Panc1 (cell line): ENCODE measurements at regions of chr2 and their contacts with region 1.

Region 1: GRCh38 chr2:109466673-109467575 is 146.8 kb downstream of the SEPTIN10 start:
- DNase-seq: peak; percentile 5
- ATAC-seq: peak; percentile 73
- H3K4me3 ChIP-seq: no peak overlapping the region
- H3K27ac ChIP-seq: no peak overlapping the region
- H3K4me1 ChIP-seq: peaks cover 6% of the 10 kb centered on the region
- H3K27me3 ChIP-seq: no peaks in the 10 kb centered on the region
- CTCF ChIP-seq: no peak

Region 2: DNA sequence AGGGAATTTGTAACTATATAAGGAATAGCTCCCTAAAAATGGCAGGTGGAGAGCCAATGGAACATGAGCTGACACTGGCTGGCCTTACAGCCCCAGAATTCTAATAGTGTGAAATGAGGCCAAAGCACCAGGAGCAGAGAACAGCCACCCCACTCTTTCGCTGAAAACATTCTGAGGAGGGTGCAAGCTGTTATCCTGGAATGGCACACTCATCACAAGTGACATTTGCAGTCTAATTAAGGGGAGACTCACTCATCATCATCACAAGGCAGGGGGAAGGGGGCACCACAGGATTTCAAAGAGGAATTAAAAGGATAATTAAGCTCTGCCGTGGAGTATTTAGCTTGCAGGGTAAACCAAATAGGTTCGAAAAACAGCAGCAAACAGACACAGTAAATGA is 572.2 kb before region 1 on chr2:
- CTCF ChIA-PET with region 1: no interaction called
- POLR2A ChIA-PET with region 1: interaction called, 10 read pairs
- in situ Hi-C with region 1: no loop called
- intact Hi-C with region 1: no loop called
- DNase-seq: no peak
- ATAC-seq: no peak
- H3K4me3 ChIP-seq: no peak overlapping the region
- H3K27ac ChIP-seq: no peak overlapping the region
- H3K4me1 ChIP-seq: no peaks in the 10 kb centered on the region
- H3K27me3 ChIP-seq: no peaks in the 10 kb centered on the region
- CTCF ChIP-seq: no peak

Region 3: DNA sequence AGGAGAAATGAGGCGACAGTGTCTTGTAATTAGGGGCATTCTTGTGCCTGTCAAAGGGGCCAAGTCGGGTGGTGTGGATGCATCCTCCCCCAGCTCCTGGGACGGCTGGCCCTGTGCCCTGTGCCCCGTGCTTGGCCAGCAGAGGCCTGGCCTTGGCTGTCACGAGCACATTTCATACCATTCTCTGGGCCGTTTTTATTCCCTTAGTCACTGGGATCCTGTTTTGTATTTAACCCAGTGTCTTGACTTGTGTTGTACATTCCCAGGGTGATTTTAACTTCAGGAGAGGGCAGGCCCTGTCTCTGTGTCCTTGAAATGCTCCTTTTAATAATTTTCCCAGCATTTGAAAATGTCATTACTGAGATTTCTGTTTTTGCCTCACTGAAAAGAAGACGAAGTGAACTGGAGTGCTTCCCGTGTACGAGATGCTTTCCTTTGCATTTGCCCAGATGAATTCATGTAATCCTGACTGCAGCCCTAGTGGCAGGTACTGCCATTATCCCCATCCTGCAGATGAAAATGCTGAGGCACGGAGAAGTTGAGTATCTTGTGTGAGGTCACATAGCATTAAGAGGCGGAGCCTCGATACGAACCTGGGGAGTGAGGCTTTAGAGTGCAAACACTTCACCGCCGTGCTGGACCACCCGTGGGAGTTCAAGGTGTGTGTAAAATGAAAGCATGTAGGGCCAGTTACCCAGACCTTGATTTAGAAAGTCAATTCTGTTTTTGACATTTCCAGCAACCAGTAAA is 280.9 kb before region 1 on chr2:
- CTCF ChIA-PET with region 1: no interaction called
- POLR2A ChIA-PET with region 1: no interaction called
- in situ Hi-C with region 1: no loop called
- intact Hi-C with region 1: no loop called
- DNase-seq: no peak
- ATAC-seq: peak; percentile 68
- H3K4me3 ChIP-seq: no peak overlapping the region
- H3K27ac ChIP-seq: peak overlapping the region; percentile 6
- H3K4me1 ChIP-seq: peaks cover 8% of the 10 kb centered on the region; the same call in 1 of the 2 replicates
- H3K27me3 ChIP-seq: peaks cover 4% of the 10 kb centered on the region; the same call in 1 of the 2 replicates
- CTCF ChIP-seq: no peak

Region 4: DNA sequence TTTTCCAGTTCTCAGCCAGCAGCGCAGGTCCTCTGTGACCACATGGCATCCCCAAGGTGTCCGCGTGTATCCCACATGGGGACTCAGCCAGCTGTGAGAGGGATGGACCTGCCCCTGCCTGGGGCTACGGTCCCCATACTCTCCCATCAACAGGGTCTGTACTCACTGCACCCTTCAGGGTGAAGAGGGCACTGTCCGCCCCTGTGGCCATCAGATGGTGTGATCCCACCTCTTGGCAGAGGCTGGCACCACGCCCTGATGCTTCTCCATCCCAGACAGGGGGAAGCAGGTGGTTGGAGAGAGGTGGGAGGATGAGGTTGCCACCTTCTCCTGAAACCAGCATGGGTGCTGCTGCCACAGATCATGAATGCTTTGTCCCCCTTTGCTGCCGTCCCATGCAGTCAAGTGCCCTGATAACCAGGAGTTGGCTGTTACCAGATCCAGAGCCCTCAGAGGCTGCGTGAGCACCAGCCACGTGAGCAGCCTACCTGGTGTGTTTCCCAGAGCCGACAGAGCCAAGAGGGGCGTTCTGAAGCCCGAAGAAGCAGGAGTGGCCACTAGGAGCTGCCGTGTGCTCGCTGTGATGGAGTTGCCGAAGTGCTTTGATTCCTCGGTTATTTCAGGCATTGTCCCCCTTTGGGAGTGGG is 244.0 kb before region 1 on chr2:
- CTCF ChIA-PET with region 1: no interaction called
- POLR2A ChIA-PET with region 1: no interaction called
- in situ Hi-C with region 1: no loop called
- intact Hi-C with region 1: no loop called
- DNase-seq: no peak
- ATAC-seq: 0 out of 2 replicates have a peak, but pooled peaks have one; percentile 26
- H3K4me3 ChIP-seq: no peak overlapping the region
- H3K27ac ChIP-seq: no peak overlapping the region
- H3K4me1 ChIP-seq: no peaks in the 10 kb centered on the region
- H3K27me3 ChIP-seq: no peaks in the 10 kb centered on the region
- CTCF ChIP-seq: peak; percentile 39; the same call in 1 of the 2 replicates

Region 5: DNA sequence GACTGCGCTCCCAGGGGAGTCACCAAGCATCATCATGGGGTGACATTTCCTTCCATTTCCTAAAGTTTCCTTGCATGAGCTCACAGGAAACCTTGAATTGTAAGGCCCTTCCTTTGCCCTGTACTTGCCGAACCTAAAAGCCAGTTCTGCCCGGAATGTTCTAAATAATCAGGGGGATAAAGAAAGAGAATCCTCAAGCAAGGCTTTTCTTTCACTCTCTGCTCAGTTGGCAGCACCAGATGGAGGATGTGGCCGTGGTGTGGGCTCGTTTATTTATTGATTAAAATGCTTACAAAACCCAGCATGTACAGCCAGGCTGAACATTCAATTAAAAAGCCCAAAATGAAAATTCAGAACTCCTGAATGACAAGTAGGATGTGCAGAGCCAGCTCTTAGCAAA is 167.4 kb before region 1 on chr2:
- CTCF ChIA-PET with region 1: no interaction called
- POLR2A ChIA-PET with region 1: no interaction called
- in situ Hi-C with region 1: no loop called
- intact Hi-C with region 1: no loop called
- DNase-seq: no peak
- ATAC-seq: no peak
- H3K4me3 ChIP-seq: no peak overlapping the region
- H3K27ac ChIP-seq: no peak overlapping the region
- H3K4me1 ChIP-seq: no peaks in the 10 kb centered on the region
- H3K27me3 ChIP-seq: no peaks in the 10 kb centered on the region
- CTCF ChIP-seq: no peak

Region 6: DNA sequence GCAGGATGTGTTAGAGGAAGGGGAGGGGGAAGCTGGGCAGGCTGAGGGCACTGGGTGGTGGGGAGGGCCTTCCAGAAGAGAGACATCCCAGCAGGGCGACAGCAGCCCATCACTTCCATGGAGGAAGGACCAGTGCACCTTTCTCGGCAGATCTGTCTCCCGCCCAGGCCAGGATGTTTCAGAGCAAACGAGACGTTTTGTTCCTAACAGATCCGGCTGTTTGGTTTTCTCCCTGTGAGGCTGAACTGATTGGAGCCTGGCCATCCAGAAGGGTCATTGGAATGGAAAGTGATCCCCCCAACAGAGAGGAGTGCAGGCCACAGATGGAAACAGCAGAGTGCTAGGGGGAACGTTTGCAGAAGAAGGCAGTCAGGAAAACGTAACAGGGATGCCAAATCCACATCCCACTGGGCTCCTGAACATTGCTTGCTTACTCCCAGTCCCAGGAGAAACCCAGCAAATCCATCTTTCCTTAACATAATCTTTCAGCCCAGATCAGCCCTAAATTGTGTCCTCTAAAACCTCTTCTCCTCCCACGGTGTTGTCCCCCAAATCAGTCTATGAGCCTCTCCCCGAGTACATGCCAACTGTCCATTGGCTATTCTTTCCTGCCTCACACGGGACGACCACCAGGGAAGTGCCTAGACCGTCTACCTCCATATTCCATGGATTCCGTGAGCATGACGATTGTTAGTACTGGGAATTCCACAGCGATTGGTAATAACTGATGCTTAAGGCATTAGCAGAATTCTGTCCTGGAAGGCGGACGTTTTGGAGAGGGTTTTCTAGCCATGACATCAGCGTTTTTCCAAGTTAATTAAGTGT is 20.0 kb after region 1 on chr2:
- CTCF ChIA-PET with region 1: no interaction called
- POLR2A ChIA-PET with region 1: no interaction called
- in situ Hi-C with region 1: no loop called
- intact Hi-C with region 1: loop called (anchors 1 kb)
- DNase-seq: no peak
- ATAC-seq: no peak; the same call in 1 of the 2 replicates
- H3K4me3 ChIP-seq: no peak overlapping the region
- H3K27ac ChIP-seq: no peak overlapping the region
- H3K4me1 ChIP-seq: no peaks in the 10 kb centered on the region
- H3K27me3 ChIP-seq: no peaks in the 10 kb centered on the region
- CTCF ChIP-seq: no peak